ENCODE measurements at regions of chr15 and their contacts with region 1.

Region 1: GRCh38 chr15:40593588-40594428 is at the start of gene KNL1:
- DNase-seq: peak; percentile 90 to 95
- ATAC-seq: peak; percentile 95
- H3K4me3 ChIP-seq: peak within 1 kb of the TSS; percentile 0 to 48
- H3K27ac ChIP-seq: peak within 1 kb of the TSS; percentile 60 to 61
- H3K4me1 ChIP-seq: no peaks in the 10 kb centered on the region
- H3K27me3 ChIP-seq: no peaks in the 10 kb centered on the region
- total RNA-seq, gene KNL1: 0.42 to 1.6 TPM

Region 2: GRCh38 chr15:40694688-40695468 is 101.1 kb after region 1 on chr15 and contains the start of gene RAD51:
- intact Hi-C with region 1: loop called in 1 of 2 experiments (anchors 5 kb)
- DNase-seq: peak; percentile 97 to 98
- ATAC-seq: peak; percentile 97
- H3K4me3 ChIP-seq: peak within 1 kb of the TSS; percentile 70 to 77
- H3K27ac ChIP-seq: peak within 1 kb of the TSS; percentile 63 to 96
- H3K4me1 ChIP-seq: peaks cover 1 to 2% of the 10 kb centered on the region in 2 donors
- H3K27me3 ChIP-seq: no peaks in the 10 kb centered on the region
- total RNA-seq, gene RAD51: 0.42 to 0.87 TPM

Region 3: GRCh38 chr15:40754883-40755811 is 161.3 kb after region 1 on chr15 and contains the start of gene RMDN3:
- intact Hi-C with region 1: loop called (anchors 10 kb)
- DNase-seq: peak; percentile 96 to 98
- ATAC-seq: peak; percentile 98
- H3K4me3 ChIP-seq: peak within 1 kb of the TSS; percentile 78 to 80
- H3K27ac ChIP-seq: peak within 1 kb of the TSS in 1 of 2 donors; percentile 79
- H3K4me1 ChIP-seq: no peaks in the 10 kb centered on the region
- H3K27me3 ChIP-seq: no peaks in the 10 kb centered on the region
- total RNA-seq, gene RMDN3: 21.1 to 29.1 TPM

Region 4: GRCh38 chr15:40763801-40764732 is 170.3 kb after region 1 on chr15 and contains the start of gene GCHFR:
- intact Hi-C with region 1: loop called (anchors 10 kb)
- DNase-seq: peak; percentile 87 to 93
- ATAC-seq: peak; percentile 85
- H3K4me3 ChIP-seq: peak within 1 kb of the TSS; percentile 7 to 57
- H3K27ac ChIP-seq: peak within 1 kb of the TSS in 1 of 2 donors; percentile 74
- H3K4me1 ChIP-seq: no peaks in the 10 kb centered on the region
- H3K27me3 ChIP-seq: no peaks in the 10 kb centered on the region
- total RNA-seq, gene GCHFR: 4.5 to 7.7 TPM

Region 5: DNA sequence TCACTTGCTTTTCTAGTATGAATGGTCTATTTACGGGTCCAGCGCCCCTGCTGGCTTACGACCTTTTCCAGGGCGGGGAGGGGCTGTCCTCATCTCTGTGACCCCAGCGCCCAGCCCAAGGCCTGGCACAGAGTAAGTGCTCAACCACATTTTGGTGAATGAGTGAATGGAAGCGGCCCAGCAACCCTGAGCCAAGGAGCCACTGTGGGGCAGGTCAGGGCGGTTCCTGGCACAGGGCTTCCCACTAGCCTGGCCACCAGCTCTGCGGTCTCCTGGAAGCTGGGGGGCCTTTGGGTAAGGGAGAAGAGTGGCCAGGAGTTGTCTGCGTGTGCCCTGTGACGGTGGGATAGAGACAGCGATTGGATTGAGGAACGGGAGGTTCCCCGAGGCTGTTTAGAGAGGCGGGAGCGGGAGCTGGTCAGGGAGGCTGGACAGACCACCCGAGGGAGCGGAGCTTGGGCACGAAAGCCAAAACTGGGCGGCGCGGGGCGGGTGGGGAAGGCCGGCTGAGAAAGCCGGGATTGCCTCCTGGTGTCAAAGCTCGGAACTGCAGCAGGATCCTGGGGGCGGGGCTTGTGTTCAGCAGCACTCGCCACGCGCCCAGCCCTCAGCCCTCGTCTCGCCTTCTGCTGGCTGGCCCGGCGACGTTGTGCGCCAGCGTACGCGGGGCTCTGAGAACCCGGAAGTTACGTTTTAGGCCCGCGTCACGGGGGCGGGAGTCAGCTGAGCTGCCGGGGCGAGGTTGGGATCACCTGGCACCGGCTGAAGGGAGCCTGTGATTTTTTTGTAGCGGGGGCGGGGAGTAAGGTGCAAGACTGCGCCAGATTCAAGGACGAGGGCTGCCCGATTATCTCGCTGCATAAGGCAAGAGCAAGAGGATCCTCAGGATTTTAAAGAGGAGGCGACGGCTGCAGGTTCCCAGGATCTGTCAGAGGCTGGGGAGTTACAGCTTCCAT is 300.2 kb after region 1 on chr15 and contains the start of gene VPS18:
- intact Hi-C with region 1: loop called in 1 of 2 experiments (anchors 5 kb)
- DNase-seq: peak; percentile 99 to 100
- ATAC-seq: peak; percentile 99
- H3K4me3 ChIP-seq: peak within 1 kb of the TSS; percentile 82 to 84
- H3K27ac ChIP-seq: peak within 1 kb of the TSS; percentile 28 to 66
- H3K4me1 ChIP-seq: no peaks in the 10 kb centered on the region
- H3K27me3 ChIP-seq: no peaks in the 10 kb centered on the region
- total RNA-seq, gene VPS18: 18.6 to 22.5 TPM

Region 6: DNA sequence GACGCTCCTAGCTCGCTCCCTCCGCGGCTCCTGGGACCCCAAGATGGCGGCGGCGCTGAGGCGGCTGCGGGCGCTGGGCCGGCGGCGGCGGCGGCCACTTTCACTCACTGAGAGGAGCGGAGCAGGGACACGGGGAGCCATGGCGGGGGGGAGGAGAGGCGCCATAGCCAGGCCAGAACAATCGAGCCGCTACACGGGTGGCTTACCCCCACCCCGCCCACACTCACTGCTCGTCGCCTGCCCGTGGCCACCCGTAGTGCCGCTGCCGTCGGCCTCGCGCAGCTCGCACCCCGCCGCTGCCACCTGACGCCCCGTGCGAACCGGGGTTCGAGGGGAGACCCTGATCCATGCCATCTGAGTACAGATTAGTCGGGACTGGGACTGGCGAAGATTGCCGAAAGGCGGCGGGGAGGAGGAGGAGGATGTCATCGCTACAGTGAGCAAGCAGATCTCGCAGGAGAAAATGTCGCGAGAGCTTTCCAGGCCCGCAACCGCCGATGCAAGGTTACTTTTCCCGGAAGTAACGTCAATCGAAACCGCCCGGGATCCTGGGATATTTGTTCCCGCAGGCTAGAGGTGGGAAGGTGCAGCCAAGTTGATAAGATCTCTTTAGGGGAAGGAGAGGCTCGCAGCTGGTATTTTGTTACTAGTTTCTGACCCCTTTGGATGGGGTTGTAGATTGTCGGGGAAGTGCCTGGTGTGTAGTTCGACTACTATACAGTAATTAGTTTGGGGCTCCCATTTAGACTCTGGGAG is 522.5 kb after region 1 on chr15 and contains the start of gene INO80:
- intact Hi-C with region 1: loop called in 1 of 2 experiments (anchors 10 kb)
- DNase-seq: peak; percentile 99 to 100
- ATAC-seq: peak; percentile 98
- H3K4me3 ChIP-seq: peak within 1 kb of the TSS; percentile 78 to 91
- H3K27ac ChIP-seq: peak within 1 kb of the TSS; percentile 87 to 94
- H3K4me1 ChIP-seq: no peaks in the 10 kb centered on the region
- H3K27me3 ChIP-seq: no peaks in the 10 kb centered on the region
- total RNA-seq, gene INO80: 23.5 to 25.1 TPM

Measured in aorta (tissue), 5 donors.